CD8-positive, alpha-beta T cell (primary cell): ENCODE measurements at regions of chr1 and their contacts with region 1.

Region 1: GRCh38 chr1:243230914-243231313 is 24.2 kb downstream of the CEP170 start:
- DNase-seq: no peak
- ATAC-seq: peak; percentile 48
- H3K4me3 ChIP-seq: no peak overlapping the region
- H3K4me3 Mint-ChIP-seq: no peak overlapping the region
- H3K27ac ChIP-seq: no peak overlapping the region
- H3K27ac Mint-ChIP-seq: no peak overlapping the region
- H3K4me1 ChIP-seq: no peaks in the 10 kb centered on the region
- H3K4me1 Mint-ChIP-seq: peaks cover 18% of the 10 kb centered on the region
- H3K27me3 ChIP-seq: no peaks in the 10 kb centered on the region
- H3K27me3 Mint-ChIP-seq: no peaks in the 10 kb centered on the region
- CTCF ChIP-seq: no peak

Region 2: DNA sequence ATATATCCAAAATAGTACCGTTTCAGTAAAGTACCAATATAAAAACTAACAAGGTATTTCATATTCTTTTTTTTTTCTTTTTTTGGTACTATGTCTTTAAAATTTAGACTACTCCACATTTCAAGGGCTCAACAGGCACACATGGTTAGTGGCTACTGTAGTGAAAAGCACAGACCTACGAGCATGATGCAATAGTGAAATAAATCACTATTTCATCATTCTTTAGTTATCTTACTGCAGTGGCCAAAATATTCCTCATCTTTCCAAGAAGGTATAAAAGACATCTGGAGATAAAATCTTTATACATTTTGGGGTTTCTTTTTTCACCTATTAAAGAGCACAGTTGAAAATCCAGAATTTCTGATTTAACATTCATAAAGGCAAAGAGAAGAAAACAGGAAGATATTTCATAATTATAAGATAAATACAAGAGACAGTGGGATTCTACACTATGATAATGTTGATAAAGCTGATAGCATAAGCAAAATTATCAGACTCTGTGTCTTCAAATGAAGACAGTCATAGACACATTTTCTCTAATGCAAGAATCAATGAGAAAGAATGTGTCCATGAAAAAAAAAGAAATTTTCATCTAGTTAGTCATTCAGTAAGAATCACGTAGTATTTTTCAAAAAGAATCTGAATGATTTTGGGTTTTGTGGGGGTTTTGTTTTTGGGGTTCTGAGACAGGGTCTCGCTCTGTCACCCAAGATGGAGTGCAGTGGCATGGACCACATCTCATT is 17.7 kb before region 1 on chr1:
- CTCF ChIA-PET with region 1: no interaction called
- POLR2A ChIA-PET with region 1: no interaction called
- intact Hi-C with region 1: loop called in 1 of 2 experiments (anchors 1 kb)
- DNase-seq: no peak
- ATAC-seq: no peak
- H3K4me3 ChIP-seq: no peak overlapping the region
- H3K4me3 Mint-ChIP-seq: no peak overlapping the region
- H3K27ac ChIP-seq: no peak overlapping the region
- H3K27ac Mint-ChIP-seq: no peak overlapping the region
- H3K4me1 ChIP-seq: no peaks in the 10 kb centered on the region
- H3K4me1 Mint-ChIP-seq: peaks cover 5% of the 10 kb centered on the region
- H3K27me3 ChIP-seq: no peaks in the 10 kb centered on the region
- H3K27me3 Mint-ChIP-seq: no peaks in the 10 kb centered on the region
- CTCF ChIP-seq: no peak

Region 3: GRCh38 chr1:243819438-243819839 is 588.5 kb after region 1 on chr1:
- CTCF ChIA-PET with region 1: no interaction called
- POLR2A ChIA-PET with region 1: no interaction called
- intact Hi-C with region 1: no loop called
- DNase-seq: peak in 1 of 9 experiments; percentile 12
- ATAC-seq: no peak
- H3K4me3 ChIP-seq: no peak overlapping the region
- H3K4me3 Mint-ChIP-seq: no peak overlapping the region
- H3K27ac ChIP-seq: no peak overlapping the region
- H3K27ac Mint-ChIP-seq: no peak overlapping the region
- H3K4me1 ChIP-seq: no peaks in the 10 kb centered on the region
- H3K4me1 Mint-ChIP-seq: peaks cover 25% of the 10 kb centered on the region
- H3K27me3 ChIP-seq: no peaks in the 10 kb centered on the region
- H3K27me3 Mint-ChIP-seq: no peaks in the 10 kb centered on the region
- CTCF ChIP-seq: no peak